Panc1 (cell line): ENCODE measurements at regions of chr7 and their contacts with region 1.

Region 1: GRCh38 chr7:64618785-64619456 is 47.0 kb upstream of the ZNF107 start:
- DNase-seq: peak; percentile 65
- ATAC-seq: peak; percentile 91
- H3K4me3 ChIP-seq: 0 out of 4 replicates have a peak overlapping the region, but pooled peaks of 1 of the 2 experiments have one; percentile 7
- H3K27ac ChIP-seq: no peak overlapping the region
- H3K4me1 ChIP-seq: 0 out of 2 replicates have a peak, but pooled peaks cover 3% of the 10 kb centered on the region
- H3K27me3 ChIP-seq: no peaks in the 10 kb centered on the region
- CTCF ChIP-seq: peak; percentile 75

Region 2: GRCh38 chr7:64485623-64486022 is 133.3 kb before region 1 on chr7:
- CTCF ChIA-PET with region 1: interaction called, 4 read pairs
- POLR2A ChIA-PET with region 1: no interaction called
- in situ Hi-C with region 1: no loop called
- intact Hi-C with region 1: loop called (anchors 10 kb)
- DNase-seq: no peak
- ATAC-seq: no peak
- H3K4me3 ChIP-seq: no peak overlapping the region
- H3K27ac ChIP-seq: no peak overlapping the region
- H3K4me1 ChIP-seq: no peaks in the 10 kb centered on the region
- H3K27me3 ChIP-seq: no peaks in the 10 kb centered on the region
- CTCF ChIP-seq: no peak

Region 3: GRCh38 chr7:64551375-64552142 is 67.4 kb before region 1 on chr7:
- CTCF ChIA-PET with region 1: no interaction called
- POLR2A ChIA-PET with region 1: interaction called, 11 read pairs
- in situ Hi-C with region 1: no loop called
- intact Hi-C with region 1: no loop called
- DNase-seq: no peak
- ATAC-seq: no peak
- H3K4me3 ChIP-seq: no peak overlapping the region
- H3K27ac ChIP-seq: no peak overlapping the region
- H3K4me1 ChIP-seq: no peaks in the 10 kb centered on the region
- H3K27me3 ChIP-seq: no peaks in the 10 kb centered on the region
- CTCF ChIP-seq: no peak

Region 4: GRCh38 chr7:64599355-64599754 is 19.6 kb before region 1 on chr7:
- CTCF ChIA-PET with region 1: interaction called, 11 read pairs
- POLR2A ChIA-PET with region 1: no interaction called
- in situ Hi-C with region 1: no loop called
- intact Hi-C with region 1: no loop called
- DNase-seq: no peak
- ATAC-seq: peak; percentile 62; the same call in 1 of the 2 replicates
- H3K4me3 ChIP-seq: no peak overlapping the region
- H3K27ac ChIP-seq: no peak overlapping the region
- H3K4me1 ChIP-seq: no peaks in the 10 kb centered on the region
- H3K27me3 ChIP-seq: no peaks in the 10 kb centered on the region
- CTCF ChIP-seq: peak; percentile 10; the same call in 1 of the 2 replicates

Region 5: GRCh38 chr7:64951250-64951848 is 332.4 kb after region 1 on chr7:
- CTCF ChIA-PET with region 1: no interaction called
- POLR2A ChIA-PET with region 1: no interaction called
- in situ Hi-C with region 1: no loop called
- intact Hi-C with region 1: no loop called
- DNase-seq: peak; percentile 30
- ATAC-seq: peak; percentile 75
- H3K4me3 ChIP-seq: no peak overlapping the region
- H3K27ac ChIP-seq: no peak overlapping the region
- H3K4me1 ChIP-seq: peaks cover 8% of the 10 kb centered on the region
- H3K27me3 ChIP-seq: peaks cover 6% of the 10 kb centered on the region
- CTCF ChIP-seq: peak; percentile 82